ENCODE measurements at regions of chr11 and their contacts with region 1.

Region 1: GRCh38 chr11:18321980-18322711 is at the starts of genes GTF2H1 and HPS5:
- DNase-seq: peak; percentile 92 to 99 (median 97)

Region 2: GRCh38 chr11:17770048-17770652 is 552.0 kb before region 1 on chr11:
- intact Hi-C with region 1: no loop called
- DNase-seq: no peak

Region 3: GRCh38 chr11:18395735-18396504 is 73.8 kb after region 1 on chr11:
- intact Hi-C with region 1: loop called (anchors 2 kb)
- DNase-seq: peak; percentile 87 to 98 (median 96)